ENCODE measurements at regions of chr2 and their contacts with region 1.

Region 1: DNA sequence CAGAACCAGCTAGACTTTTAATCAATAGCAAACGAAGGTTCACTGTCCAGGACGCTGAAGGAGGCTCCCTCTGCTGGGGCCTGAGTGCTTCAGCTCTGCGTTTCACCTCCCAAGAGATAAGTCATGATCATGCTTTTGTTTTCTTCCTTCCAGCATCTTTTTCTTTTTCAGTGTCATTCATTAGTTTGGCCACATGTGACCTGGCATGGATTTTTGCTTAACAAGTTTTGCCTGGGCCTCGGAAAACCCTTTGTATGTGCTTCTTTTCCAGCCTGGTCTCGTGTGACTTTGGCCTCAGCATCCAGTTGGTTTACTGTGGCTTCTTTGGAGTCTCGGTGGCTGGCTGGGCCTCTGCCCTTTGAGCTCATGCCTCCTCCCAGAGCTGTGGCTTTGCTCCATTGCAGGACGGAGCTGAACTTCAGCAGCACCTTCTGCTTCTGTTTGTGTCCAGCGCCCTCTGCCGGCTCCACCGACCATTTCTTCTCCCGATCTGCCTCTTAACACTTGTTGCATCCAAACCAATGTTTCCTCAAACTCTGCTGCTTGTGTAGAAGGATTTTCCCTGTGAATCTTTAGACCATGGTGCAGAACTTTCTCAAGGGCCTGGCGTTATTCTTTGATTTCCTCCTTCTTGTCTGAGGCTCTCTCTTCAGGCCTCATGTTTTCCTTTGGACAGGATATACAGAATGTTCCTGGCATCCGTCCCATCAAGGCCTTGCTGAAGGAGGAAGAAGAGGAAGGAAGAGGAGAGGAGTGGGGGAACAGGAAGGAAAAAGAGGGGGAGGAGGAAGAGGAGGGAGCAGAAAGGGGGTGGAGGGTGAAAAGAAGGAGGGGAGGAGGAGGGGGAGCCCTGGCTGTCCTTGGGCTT is 23.6 kb upstream of the HES6 start:
- DNase-seq: peak; percentile 78 to 90
- H3K4me3 ChIP-seq: no peak overlapping the region
- H3K4me1 ChIP-seq: no peaks in the 10 kb centered on the region
- H3K27me3 ChIP-seq: no peaks in the 10 kb centered on the region

Region 2: GRCh38 chr2:237858294-237859081 is 404.9 kb before region 1 on chr2:
- in situ Hi-C with region 1: loop called (anchors 10 kb)
- DNase-seq: peak; percentile 74 to 81
- H3K4me3 ChIP-seq: peak overlapping the region; percentile 42
- H3K4me1 ChIP-seq: peaks cover 33% of the 10 kb centered on the region
- H3K27me3 ChIP-seq: no peaks in the 10 kb centered on the region

Measured in HAP-1 (cell line).